ENCODE measurements at regions of chr6 and their contacts with region 1.

Region 1: DNA sequence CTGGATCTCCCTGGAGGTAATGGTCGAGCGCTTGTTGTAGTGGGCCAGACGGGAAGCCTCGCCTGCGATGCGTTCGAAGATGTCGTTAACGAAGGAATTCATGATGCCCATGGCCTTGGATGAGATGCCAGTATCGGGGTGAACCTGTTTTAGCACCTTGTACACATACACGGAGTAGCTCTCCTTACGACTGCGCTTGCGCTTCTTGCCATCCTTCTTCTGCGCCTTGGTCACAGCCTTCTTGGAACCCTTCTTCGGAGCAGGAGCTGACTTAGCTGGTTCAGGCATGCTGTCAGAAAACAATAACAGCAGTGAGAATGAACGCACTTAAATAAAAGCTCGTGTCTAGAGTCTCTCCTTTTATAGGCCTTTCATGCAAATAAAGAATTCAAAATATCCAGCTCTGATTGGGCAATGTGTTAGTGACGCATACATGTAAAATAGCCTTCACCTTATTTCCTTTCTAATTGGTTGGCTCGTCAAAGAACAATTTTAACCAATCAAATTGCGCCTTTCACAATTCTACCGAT is 129.2 kb downstream of the HFE start:
- H3K4me3 Mint-ChIP-seq: no peak overlapping the region
- H3K27ac Mint-ChIP-seq: no peak overlapping the region
- H3K4me1 Mint-ChIP-seq: peaks cover 5% of the 10 kb centered on the region
- H3K27me3 Mint-ChIP-seq: no peaks in the 10 kb centered on the region

Region 2: DNA sequence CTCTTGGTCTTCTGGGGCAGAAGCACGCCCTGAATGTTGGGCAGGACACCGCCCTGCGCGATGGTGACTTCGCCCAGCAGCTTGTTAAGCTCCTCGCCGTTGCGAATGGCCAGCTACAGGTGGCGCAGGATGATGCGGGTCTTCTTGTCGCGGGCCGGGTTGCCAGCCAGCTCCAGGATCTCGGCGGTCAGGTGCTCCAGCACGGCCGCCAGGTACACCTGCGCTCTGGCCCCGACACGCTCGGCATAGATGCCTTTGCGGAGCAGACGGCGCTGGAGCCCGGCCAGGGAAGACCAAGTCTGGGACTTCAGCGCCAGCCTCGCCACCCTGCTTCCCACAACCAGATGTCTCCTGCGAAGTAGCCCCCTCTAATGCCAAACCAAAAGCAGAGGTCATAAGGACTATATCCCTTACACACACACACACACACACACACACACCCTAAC is 334.3 kb before region 1 on chr6:
- intact Hi-C with region 1: no loop called
- H3K4me3 Mint-ChIP-seq: peak overlapping the region; percentile 61
- H3K27ac Mint-ChIP-seq: peak overlapping the region; percentile 31
- H3K4me1 Mint-ChIP-seq: peaks cover 16% of the 10 kb centered on the region
- H3K27me3 Mint-ChIP-seq: peaks cover 7% of the 10 kb centered on the region

Region 3: DNA sequence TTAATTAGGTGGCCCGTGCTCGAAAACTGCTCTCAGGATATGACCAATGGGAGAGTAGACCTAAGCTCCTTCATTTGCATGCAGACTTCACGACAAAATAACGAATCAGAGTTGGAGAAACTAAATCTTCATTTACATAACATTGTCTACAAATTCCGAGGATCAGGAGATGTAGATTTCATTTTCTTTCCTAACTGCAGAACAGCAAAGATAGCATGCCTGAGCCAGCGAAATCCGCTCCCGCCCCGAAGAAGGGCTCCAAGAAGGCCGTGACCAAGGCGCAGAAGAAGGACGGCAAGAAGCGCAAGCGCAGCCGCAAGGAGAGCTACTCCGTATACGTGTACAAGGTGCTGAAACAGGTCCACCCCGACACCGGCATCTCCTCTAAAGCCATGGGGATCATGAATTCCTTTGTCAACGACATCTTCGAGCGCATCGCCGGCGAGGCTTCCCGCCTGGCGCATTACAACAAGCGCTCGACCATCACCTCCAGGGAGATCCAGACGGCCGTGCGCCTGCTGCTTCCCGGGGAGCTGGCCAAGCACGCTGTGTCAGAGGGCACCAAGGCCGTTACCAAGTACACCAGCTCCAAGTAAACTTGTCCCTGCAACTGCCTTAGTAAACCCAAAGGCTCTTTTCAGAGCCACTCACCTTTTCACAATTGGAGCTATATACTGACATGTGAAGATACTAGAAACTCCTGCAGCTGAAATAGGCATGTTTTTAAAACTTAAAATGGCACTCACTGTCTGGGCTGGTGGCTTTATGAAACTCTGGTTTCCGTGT is 32.6 kb before region 1 on chr6:
- intact Hi-C with region 1: loop called (anchors 5 kb)
- H3K4me3 Mint-ChIP-seq: peak overlapping the region; percentile 85
- H3K27ac Mint-ChIP-seq: peak overlapping the region; percentile 85
- H3K4me1 Mint-ChIP-seq: peaks cover 26% of the 10 kb centered on the region
- H3K27me3 Mint-ChIP-seq: no peaks in the 10 kb centered on the region

Region 4: DNA sequence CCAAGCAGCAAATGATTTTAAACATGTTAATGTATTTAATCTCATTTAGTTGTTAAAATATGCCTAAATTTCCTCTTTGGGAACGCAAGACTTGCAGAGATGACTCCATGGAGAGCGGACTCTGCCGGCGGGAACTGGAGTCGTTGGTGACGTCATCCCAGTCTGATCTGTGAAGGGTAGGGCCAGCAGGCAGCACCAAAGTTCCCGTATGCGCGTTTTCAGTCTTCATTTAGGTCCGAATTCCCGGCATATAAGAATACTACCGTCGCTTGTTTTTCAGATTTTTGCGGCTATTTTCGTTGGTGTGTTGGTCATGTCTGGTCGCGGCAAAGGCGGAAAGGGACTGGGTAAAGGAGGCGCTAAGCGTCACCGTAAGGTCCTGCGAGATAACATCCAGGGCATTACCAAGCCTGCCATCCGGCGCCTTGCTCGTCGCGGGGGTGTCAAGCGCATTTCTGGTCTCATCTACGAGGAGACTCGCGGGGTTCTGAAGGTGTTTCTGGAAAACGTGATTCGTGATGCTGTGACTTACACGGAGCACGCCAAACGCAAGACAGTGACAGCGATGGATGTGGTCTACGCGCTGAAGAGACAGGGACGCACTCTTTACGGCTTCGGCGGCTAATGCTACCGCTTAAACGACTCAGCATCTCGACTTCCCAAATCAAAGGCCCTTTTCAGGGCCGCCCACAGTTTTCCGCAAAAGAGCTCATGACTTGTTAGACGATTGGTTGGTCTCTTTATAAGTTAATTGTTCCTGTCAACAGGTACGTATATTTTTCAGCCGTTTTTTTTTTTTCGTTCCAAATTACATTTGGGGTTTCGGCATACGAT is 11.9 kb before region 1 on chr6:
- intact Hi-C with region 1: loop called (anchors 1 kb)
- H3K4me3 Mint-ChIP-seq: no peak overlapping the region
- H3K27ac Mint-ChIP-seq: no peak overlapping the region
- H3K4me1 Mint-ChIP-seq: peaks cover 11% of the 10 kb centered on the region
- H3K27me3 Mint-ChIP-seq: no peaks in the 10 kb centered on the region

Region 5: GRCh38 chr6:26234421-26235296 is 18.2 kb after region 1 on chr6:
- intact Hi-C with region 1: loop called (anchors 2 kb)
- H3K4me3 Mint-ChIP-seq: peak overlapping the region; percentile 83
- H3K27ac Mint-ChIP-seq: peak overlapping the region; percentile 87
- H3K4me1 Mint-ChIP-seq: peaks cover 33% of the 10 kb centered on the region
- H3K27me3 Mint-ChIP-seq: no peaks in the 10 kb centered on the region

Region 6: GRCh38 chr6:26270903-26271667 is 54.7 kb after region 1 on chr6:
- intact Hi-C with region 1: loop called (anchors 5 kb)
- H3K4me3 Mint-ChIP-seq: peak overlapping the region; percentile 60
- H3K27ac Mint-ChIP-seq: no peak overlapping the region
- H3K4me1 Mint-ChIP-seq: peaks cover 11% of the 10 kb centered on the region
- H3K27me3 Mint-ChIP-seq: no peaks in the 10 kb centered on the region

Measured in dendritic cell treated with granulocyte-macrophage colony-stimulating factor and Interleukin-4, amounts not matched to agents 40 ng/mL and 50 ng/mL, for 4 days (primary cell).